Activated CD4-positive, alpha-beta T cell treated with anti-CD3 and anti-CD28 coated beads, Interleukin-2, amount 10 ng/mL, durations not matched to agents 7 days and 5 days (primary cell): ENCODE measurements at regions of chr11 and their contacts with region 1.

Region 1: DNA sequence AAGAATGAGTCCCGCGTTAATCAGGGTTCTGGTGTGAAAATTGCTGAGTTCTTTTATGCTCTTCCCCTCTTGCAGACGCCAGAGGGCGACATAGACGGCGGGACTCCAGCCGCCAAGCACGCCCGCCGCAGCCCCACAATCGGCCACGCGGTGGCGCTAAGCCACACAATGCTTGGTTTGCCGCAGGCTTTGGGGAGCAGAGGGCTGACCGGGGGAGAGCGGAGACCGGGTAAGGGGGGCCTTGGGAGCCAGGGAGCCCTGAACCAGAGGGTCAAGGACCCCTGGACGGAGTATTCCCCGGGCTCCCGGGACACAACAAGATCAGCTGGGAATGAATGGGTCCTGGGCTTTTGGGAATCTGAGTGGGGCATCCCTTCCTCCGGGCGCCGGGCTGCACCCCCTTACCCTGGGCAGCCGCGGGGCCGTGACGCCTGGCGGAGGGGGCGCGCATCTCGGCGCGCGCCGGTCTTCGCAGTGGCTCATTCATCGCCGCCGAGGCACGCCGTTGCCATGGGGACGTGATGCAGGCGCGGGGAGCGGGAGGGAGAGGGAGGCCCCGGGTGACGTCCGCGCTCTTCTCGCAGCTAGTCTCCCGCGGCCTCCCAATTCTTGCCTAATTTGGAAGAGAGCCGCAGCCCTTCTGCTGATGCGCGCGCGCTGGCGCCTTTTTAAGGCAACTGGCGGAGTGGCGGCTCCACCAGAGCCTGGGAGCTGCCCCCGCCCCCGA is 12.2 kb upstream of the NPAS4 start:
- DNase-seq: peak; percentile 93
- H3K4me3 Mint-ChIP-seq: peak overlapping the region; percentile 63
- H3K27ac Mint-ChIP-seq: no peak overlapping the region
- H3K4me1 Mint-ChIP-seq: peaks cover 3% of the 10 kb centered on the region
- H3K27me3 Mint-ChIP-seq: peaks cover 17% of the 10 kb centered on the region

Region 2: GRCh38 chr11:66363805-66364535 is 44.7 kb before region 1 on chr11:
- CTCF ChIA-PET with region 1: no interaction called
- POLR2A ChIA-PET with region 1: no interaction called
- DNase-seq: peak; percentile 73
- H3K4me3 Mint-ChIP-seq: no peak overlapping the region
- H3K27ac Mint-ChIP-seq: no peak overlapping the region
- H3K4me1 Mint-ChIP-seq: no peaks in the 10 kb centered on the region
- H3K27me3 Mint-ChIP-seq: no peaks in the 10 kb centered on the region

Region 3: DNA sequence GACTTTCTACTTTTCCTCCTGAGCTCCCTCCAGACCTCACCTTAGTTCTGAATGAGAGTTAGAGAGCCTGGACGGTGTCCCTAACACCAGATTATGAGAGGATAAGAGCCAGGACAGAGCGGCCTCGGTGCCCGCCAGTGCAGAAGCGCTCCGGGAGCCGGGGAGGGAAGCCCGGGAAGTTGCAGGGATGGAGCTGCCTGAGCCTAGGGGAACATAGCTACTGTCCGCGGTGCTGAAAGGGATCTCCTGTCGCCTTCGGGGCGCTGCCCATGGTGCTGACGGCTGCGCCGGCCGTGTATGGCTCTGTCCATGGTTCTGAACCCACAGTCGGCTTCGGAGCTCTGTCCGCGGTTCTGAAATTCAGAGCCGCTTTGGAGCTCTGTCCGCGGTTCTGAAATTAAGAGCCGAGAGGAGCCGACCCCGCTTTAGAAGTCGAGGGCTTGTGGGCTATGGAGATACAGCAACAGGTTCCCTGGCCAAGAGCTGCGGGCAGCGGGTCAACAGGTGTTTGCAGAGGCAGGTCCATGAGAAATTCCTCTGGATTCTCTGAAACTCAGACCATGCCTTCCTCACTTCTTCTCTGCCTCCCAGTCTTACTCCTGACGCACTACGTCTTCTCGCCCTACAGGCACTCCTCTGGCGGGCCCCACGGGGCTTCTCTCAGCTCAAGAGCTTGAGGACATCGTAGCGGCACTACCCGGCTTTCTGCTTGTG is 13.0 kb after region 1 on chr11:
- CTCF ChIA-PET with region 1: interaction called, 23 read pairs
- POLR2A ChIA-PET with region 1: interaction called, 3 read pairs
- DNase-seq: peak; percentile 88
- H3K4me3 Mint-ChIP-seq: no peak overlapping the region
- H3K27ac Mint-ChIP-seq: no peak overlapping the region
- H3K4me1 Mint-ChIP-seq: peaks cover 18% of the 10 kb centered on the region
- H3K27me3 Mint-ChIP-seq: peaks cover 32% of the 10 kb centered on the region

Region 4: GRCh38 chr11:66429983-66430602 is 21.4 kb after region 1 on chr11:
- CTCF ChIA-PET with region 1: interaction called, 10 read pairs
- POLR2A ChIA-PET with region 1: no interaction called
- DNase-seq: peak; percentile 80
- H3K4me3 Mint-ChIP-seq: no peak overlapping the region
- H3K27ac Mint-ChIP-seq: no peak overlapping the region
- H3K4me1 Mint-ChIP-seq: peaks cover 3% of the 10 kb centered on the region
- H3K27me3 Mint-ChIP-seq: no peaks in the 10 kb centered on the region